GM12878 (cell line): ENCODE measurements at regions of chr7 and their contacts with region 1.

Region 1: DNA sequence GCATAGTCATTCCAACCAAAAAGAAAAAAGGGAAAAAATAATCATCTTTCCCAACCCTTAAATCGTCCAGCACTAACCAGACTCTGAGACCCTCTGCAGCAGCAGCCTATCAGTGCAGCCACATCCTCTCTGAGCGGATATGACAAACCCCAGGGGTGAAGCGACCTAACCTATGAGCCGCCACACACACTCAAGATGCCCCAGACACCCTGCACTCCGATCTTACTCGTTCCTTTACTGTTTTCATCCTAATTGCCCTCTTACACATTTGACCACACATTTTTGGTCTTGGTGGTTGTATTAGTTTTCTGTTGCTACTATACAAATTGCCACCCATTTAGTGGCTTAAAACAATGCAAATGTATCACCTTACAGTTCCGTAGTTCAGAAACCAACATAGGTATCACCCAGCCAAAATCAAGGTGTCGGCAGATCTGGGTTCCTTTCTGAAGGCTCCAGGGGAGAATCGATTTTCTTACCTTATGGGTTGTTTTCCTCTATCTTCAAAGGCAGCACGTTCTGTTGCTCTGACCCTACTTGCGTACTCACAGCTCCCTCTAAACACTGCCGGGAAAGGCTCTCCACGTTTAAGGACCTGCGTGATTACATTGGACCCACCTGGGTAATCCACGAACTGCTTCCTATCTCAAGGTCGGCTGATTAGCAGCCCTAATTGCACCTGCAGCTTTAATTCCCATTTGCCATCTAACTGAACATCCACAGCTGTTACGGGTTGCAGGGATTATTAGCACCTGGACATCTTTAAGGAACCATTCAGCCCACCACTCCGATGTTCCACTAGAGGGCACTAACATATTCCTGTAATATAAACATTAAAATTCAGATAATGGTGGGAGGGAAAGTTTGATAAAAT is 37.3 kb upstream of the PRSS1 start:
- DNase-seq: no peak
- ATAC-seq: peak; percentile 77
- H3K4me3 ChIP-seq: no peak overlapping the region
- H3K27ac ChIP-seq: no peak overlapping the region
- H3K4me1 ChIP-seq: no peaks in the 10 kb centered on the region
- H3K27me3 ChIP-seq: no peaks in the 10 kb centered on the region
- CTCF ChIP-seq: peak; percentile 57 to 70 (median 59)
- EP300 ChIP-seq: no peak
- POLR2A ChIP-seq: no peak
- RAD21 ChIP-seq: peak; percentile 66

Region 2: DNA sequence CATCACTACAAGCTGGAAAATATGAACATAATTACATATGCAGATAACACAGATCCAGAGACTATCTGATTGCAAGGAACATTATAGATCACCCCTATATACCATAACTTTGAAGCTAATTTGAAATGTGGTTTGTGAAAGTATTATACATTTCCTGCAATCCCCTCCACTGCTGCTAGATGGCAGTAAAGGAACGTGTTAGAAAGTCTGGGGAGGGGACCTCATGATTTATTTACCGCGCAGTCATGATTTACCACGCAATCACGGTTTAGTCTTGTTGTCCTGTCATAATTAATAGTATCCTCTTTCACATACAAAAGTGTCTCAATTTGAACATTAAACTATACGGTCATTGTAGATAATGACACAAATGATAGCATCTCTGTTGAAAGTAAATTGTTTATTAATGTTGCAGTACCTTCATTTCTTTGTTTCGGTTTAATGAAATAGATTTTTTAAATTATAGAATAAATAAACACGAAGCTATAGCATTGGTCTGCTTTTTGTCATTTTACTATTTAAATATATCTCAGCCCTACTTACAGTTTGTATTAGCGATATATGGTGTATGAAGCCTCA is 108.0 kb before region 1 on chr7:
- CTCF ChIA-PET with region 1: interaction called, 16 read pairs
- POLR2A ChIA-PET with region 1: no interaction called
- RAD21 ChIA-PET with region 1: interaction called, 4 read pairs
- SMC1A ChIA-PET with region 1: interaction called, 4 read pairs
- in situ Hi-C with region 1: no loop called
- intact Hi-C with region 1: no loop called
- DNase-seq: no peak
- ATAC-seq: peak; percentile 74
- H3K4me3 ChIP-seq: no peak overlapping the region
- H3K27ac ChIP-seq: no peak overlapping the region
- H3K4me1 ChIP-seq: no peaks in the 10 kb centered on the region
- H3K27me3 ChIP-seq: no peaks in the 10 kb centered on the region
- CTCF ChIP-seq: peak; percentile 74 to 81 (median 81)
- EP300 ChIP-seq: no peak
- POLR2A ChIP-seq: no peak
- RAD21 ChIP-seq: peak; percentile 82

Region 3: DNA sequence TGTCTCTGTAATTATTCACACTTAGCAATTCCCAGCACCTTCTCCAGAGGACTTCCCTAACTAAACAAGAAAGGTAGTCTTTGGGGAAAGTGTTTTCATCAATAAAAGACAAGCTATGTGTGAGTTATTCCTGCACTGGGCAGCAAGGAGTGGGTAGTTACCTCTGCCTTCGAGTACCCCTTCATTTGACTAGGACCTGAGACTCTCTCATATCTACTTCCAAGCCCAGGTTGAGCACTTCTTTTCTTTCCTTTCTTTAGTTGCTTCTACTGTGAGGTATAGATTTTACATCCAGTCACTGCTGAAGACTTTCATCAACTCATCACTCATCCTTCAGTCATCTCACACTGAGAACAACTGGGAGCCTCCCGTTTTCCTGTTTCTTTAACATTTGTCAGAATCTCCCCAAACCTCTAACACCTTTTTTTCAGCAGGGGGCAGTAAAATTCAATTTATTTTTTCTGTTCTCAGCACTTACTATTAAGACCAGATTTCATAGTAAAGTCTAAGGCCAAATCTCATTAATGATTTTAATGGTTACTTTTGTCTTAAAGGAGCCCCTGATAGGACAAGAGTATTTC is 42.8 kb before region 1 on chr7:
- CTCF ChIA-PET with region 1: interaction called, 18 read pairs
- POLR2A ChIA-PET with region 1: no interaction called
- RAD21 ChIA-PET with region 1: interaction called, 4 read pairs
- SMC1A ChIA-PET with region 1: interaction called, 4 read pairs
- in situ Hi-C with region 1: no loop called
- intact Hi-C with region 1: no loop called
- DNase-seq: no peak
- ATAC-seq: peak; percentile 78
- H3K4me3 ChIP-seq: no peak overlapping the region
- H3K27ac ChIP-seq: no peak overlapping the region
- H3K4me1 ChIP-seq: peaks cover 4% of the 10 kb centered on the region; the same call in 1 of the 2 replicates
- H3K27me3 ChIP-seq: no peaks in the 10 kb centered on the region
- CTCF ChIP-seq: peak; percentile 35 to 51 (median 41); a peak in 4 of 6 replicates
- EP300 ChIP-seq: no peak
- POLR2A ChIP-seq: no peak
- RAD21 ChIP-seq: peak; percentile 65

Region 4: DNA sequence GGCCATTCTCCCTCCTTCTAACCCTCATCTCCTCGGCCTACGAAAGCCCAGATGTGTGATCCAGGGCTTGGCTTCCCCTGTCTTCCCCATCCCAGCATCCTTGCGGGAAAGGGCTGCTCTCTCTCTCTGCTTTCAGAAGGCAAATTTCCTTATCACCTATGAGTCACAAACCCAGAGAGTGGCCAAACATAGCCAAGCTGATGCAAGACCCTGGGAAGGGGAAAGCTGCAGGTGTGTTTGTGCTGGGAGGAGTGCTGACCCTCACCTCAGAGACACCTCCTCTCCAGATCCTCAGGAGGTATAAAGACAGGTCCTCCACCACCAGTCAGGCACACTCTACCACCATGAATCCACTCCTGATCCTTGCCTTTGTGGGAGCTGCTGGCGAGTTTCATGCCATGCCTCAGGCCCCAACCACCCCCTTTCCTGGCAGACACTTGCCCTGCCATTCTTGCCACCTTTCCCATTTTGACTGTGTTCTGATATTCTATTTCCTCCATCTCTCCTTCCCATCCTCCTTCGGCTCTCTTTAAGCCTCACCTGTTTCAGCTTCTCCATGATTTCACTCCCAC is 48.2 kb after region 1 on chr7:
- CTCF ChIA-PET with region 1: interaction called, 10 read pairs
- POLR2A ChIA-PET with region 1: no interaction called
- RAD21 ChIA-PET with region 1: no interaction called
- SMC1A ChIA-PET with region 1: no interaction called
- in situ Hi-C with region 1: no loop called
- intact Hi-C with region 1: no loop called
- DNase-seq: no peak
- ATAC-seq: no peak
- H3K4me3 ChIP-seq: no peak overlapping the region
- H3K27ac ChIP-seq: no peak overlapping the region
- H3K4me1 ChIP-seq: no peaks in the 10 kb centered on the region
- H3K27me3 ChIP-seq: peaks cover 0 to 2% of the 10 kb centered on the region in 2 experiments; a peak in 1 of 4 replicates
- CTCF ChIP-seq: no peak
- EP300 ChIP-seq: no peak
- POLR2A ChIP-seq: no peak
- RAD21 ChIP-seq: no peak

Region 5: GRCh38 chr7:142788303-142789289 is 76.6 kb after region 1 on chr7:
- CTCF ChIA-PET with region 1: interaction called, 286 read pairs
- POLR2A ChIA-PET with region 1: interaction called, 6 read pairs
- RAD21 ChIA-PET with region 1: interaction called, 163 read pairs
- SMC1A ChIA-PET with region 1: interaction called, 235 read pairs
- in situ Hi-C with region 1: no loop called
- intact Hi-C with region 1: loop called (anchors 1 kb)
- DNase-seq: no peak
- ATAC-seq: no peak
- H3K4me3 ChIP-seq: no peak overlapping the region
- H3K27ac ChIP-seq: no peak overlapping the region
- H3K4me1 ChIP-seq: peaks cover 4% of the 10 kb centered on the region
- H3K27me3 ChIP-seq: no peaks in the 10 kb centered on the region
- CTCF ChIP-seq: no peak
- EP300 ChIP-seq: no peak
- POLR2A ChIP-seq: no peak
- RAD21 ChIP-seq: no peak